ENCODE measurements at regions of chr1 and their contacts with region 1.

Region 1: GRCh38 chr1:100351095-100351891 is 1.0 kb upstream of the CDC14A start:
- DNase-seq: peak; percentile 72 to 95 (median 82)
- ATAC-seq: peak; percentile 74
- H3K4me3 ChIP-seq: peak overlapping the region; percentile 96
- H3K4me3 Mint-ChIP-seq: peak overlapping the region; percentile 93
- H3K27ac ChIP-seq: peak overlapping the region; percentile 86 to 92
- H3K27ac Mint-ChIP-seq: peak overlapping the region; percentile 96
- H3K4me1 ChIP-seq: peaks cover 21% of the 10 kb centered on the region
- H3K4me1 Mint-ChIP-seq: peaks cover 36% of the 10 kb centered on the region
- H3K27me3 ChIP-seq: no peaks in the 10 kb centered on the region
- H3K27me3 Mint-ChIP-seq: no peaks in the 10 kb centered on the region
- CTCF ChIP-seq: peak; percentile 26

Region 2: DNA sequence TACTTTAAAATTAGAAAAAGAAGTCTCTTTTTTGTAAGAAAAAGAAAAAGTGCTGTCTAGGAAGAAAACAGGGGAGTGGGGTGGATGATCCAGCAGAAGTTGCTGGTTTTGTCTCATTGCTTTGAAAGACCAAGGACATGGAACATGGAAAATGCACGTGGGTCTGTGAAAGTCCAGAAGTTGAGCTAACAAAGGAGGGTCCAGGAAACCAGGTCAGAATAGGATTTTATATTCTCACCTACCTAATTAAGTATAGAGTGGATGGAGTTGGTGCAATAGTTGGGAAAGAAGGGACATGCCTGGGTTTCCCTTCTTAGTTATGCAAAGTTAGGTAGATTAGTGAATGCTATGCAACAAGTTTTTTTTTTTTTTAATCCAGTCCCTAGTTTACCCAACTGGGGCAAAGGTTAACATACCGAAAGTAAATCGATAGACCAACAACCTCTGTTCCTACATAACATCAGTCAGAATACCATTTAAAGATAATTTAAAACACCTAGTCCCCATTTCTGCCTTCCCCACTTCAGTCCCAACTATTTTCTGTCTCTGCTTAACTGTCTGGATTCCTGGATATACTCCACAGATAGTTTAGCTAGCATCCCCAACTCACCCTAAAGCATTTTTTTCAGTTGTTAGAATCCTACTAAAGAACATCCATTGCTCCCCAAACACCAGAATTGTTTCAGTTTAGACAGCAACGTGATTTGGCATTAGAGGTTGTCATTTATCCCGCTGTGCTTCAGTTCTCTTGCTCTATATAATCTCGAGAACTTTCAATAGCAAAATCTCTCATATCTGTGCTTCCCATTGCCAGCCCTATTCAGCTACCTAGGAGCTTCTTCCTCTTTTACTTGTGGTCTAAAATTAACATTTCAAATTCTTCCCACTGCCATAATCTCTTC is 1240.9 kb before region 1 on chr1:
- CTCF ChIA-PET with region 1: no interaction called
- POLR2A ChIA-PET with region 1: no interaction called
- intact Hi-C with region 1: no loop called
- DNase-seq: no peak
- ATAC-seq: no peak
- H3K4me3 ChIP-seq: no peak overlapping the region
- H3K4me3 Mint-ChIP-seq: no peak overlapping the region
- H3K27ac ChIP-seq: no peak overlapping the region
- H3K27ac Mint-ChIP-seq: no peak overlapping the region
- H3K4me1 ChIP-seq: peaks cover 3% of the 10 kb centered on the region
- H3K4me1 Mint-ChIP-seq: peaks cover 7% of the 10 kb centered on the region
- H3K27me3 ChIP-seq: no peaks in the 10 kb centered on the region
- H3K27me3 Mint-ChIP-seq: no peaks in the 10 kb centered on the region
- CTCF ChIP-seq: no peak

Region 3: DNA sequence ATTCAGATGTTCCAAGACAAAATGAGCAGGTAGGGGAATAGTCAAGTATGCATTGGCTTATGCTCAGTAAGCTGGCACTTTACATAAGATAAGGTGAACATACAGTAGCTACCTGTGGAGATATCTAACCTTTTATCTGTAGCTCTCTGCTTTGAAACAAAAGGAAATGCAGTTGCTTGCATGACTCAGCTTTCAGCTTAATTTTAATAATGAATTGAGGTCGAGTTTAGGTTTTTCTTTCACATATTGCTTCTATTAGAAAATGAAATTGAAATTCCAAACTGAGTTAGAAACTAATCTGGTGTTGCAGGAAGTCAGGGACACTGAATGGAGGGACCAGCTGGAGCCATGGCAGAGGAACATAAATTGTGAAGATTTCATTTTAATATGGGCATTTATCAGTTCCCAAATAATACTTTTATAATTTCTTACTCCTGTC is 593.2 kb before region 1 on chr1:
- CTCF ChIA-PET with region 1: no interaction called
- POLR2A ChIA-PET with region 1: no interaction called
- intact Hi-C with region 1: no loop called
- DNase-seq: peak in 1 of 14 experiments; percentile 2
- ATAC-seq: no peak
- H3K4me3 ChIP-seq: no peak overlapping the region
- H3K4me3 Mint-ChIP-seq: no peak overlapping the region
- H3K27ac ChIP-seq: no peak overlapping the region
- H3K27ac Mint-ChIP-seq: no peak overlapping the region
- H3K4me1 ChIP-seq: no peaks in the 10 kb centered on the region
- H3K4me1 Mint-ChIP-seq: peaks cover 8% of the 10 kb centered on the region
- H3K27me3 ChIP-seq: no peaks in the 10 kb centered on the region
- H3K27me3 Mint-ChIP-seq: no peaks in the 10 kb centered on the region
- CTCF ChIP-seq: no peak

Region 4: GRCh38 chr1:100132566-100133477 is 218.5 kb before region 1 on chr1 and contains the starts of genes SASS6 and TRMT13:
- CTCF ChIA-PET with region 1: no interaction called
- POLR2A ChIA-PET with region 1: interaction called, 3 read pairs
- intact Hi-C with region 1: loop called in 1 of 2 experiments (anchors 5 kb)
- DNase-seq: peak; percentile 83 to 97 (median 90)
- ATAC-seq: peak; percentile 97
- H3K4me3 ChIP-seq: peak within 1 kb of the TSS; percentile 77
- H3K4me3 Mint-ChIP-seq: peak within 1 kb of the TSS; percentile 89
- H3K27ac ChIP-seq: peak within 1 kb of the TSS; percentile 42 to 43
- H3K27ac Mint-ChIP-seq: peak within 1 kb of the TSS; percentile 92
- H3K4me1 ChIP-seq: peaks cover 12% of the 10 kb centered on the region
- H3K4me1 Mint-ChIP-seq: peaks cover 43% of the 10 kb centered on the region
- H3K27me3 ChIP-seq: no peaks in the 10 kb centered on the region
- H3K27me3 Mint-ChIP-seq: no peaks in the 10 kb centered on the region
- CTCF ChIP-seq: no peak
- total RNA-seq, gene SASS6: 1.7 to 1.8 TPM
- total RNA-seq, gene TRMT13: 6.3 to 6.9 TPM

Region 5: GRCh38 chr1:100284601-100285000 is 66.7 kb before region 1 on chr1:
- CTCF ChIA-PET with region 1: no interaction called
- POLR2A ChIA-PET with region 1: interaction called, 4 read pairs
- intact Hi-C with region 1: loop called in 1 of 2 experiments (anchors 5 kb)
- DNase-seq: no peak
- ATAC-seq: no peak
- H3K4me3 ChIP-seq: no peak overlapping the region
- H3K4me3 Mint-ChIP-seq: no peak overlapping the region
- H3K27ac ChIP-seq: no peak overlapping the region
- H3K27ac Mint-ChIP-seq: no peak overlapping the region
- H3K4me1 ChIP-seq: no peaks in the 10 kb centered on the region
- H3K4me1 Mint-ChIP-seq: peaks cover 15% of the 10 kb centered on the region
- H3K27me3 ChIP-seq: no peaks in the 10 kb centered on the region
- H3K27me3 Mint-ChIP-seq: no peaks in the 10 kb centered on the region
- CTCF ChIP-seq: no peak

Region 6: GRCh38 chr1:100328133-100328532 is 23.2 kb before region 1 on chr1:
- CTCF ChIA-PET with region 1: no interaction called
- POLR2A ChIA-PET with region 1: no interaction called
- intact Hi-C with region 1: no loop called
- DNase-seq: no peak
- ATAC-seq: no peak
- H3K4me3 ChIP-seq: no peak overlapping the region
- H3K4me3 Mint-ChIP-seq: no peak overlapping the region
- H3K27ac ChIP-seq: no peak overlapping the region
- H3K27ac Mint-ChIP-seq: no peak overlapping the region
- H3K4me1 ChIP-seq: no peaks in the 10 kb centered on the region
- H3K4me1 Mint-ChIP-seq: no peaks in the 10 kb centered on the region
- H3K27me3 ChIP-seq: no peaks in the 10 kb centered on the region
- H3K27me3 Mint-ChIP-seq: no peaks in the 10 kb centered on the region
- CTCF ChIP-seq: no peak

Region 7: DNA sequence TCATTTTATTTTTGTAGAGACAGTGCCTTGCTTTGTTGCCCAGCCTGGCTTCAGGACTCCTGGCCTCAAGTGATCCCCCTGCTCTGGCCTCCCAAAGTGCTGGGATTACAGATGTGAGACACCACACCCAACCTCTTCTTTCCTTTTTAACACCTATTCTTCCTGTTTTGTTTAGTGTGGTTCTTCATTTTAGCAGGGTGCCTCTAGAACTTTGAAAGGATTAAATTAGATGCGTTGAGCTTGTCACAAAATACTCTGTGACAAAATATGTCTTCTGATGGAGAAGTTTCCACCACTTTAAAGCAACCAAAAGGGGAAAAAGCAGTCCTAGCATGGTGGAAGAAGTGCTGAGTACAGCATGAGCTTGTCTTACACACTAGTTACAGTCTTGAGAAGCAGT is 43.0 kb after region 1 on chr1:
- CTCF ChIA-PET with region 1: interaction called, 13 read pairs
- POLR2A ChIA-PET with region 1: interaction called, 67 read pairs
- intact Hi-C with region 1: loop called (anchors 2 to 5 kb)
- DNase-seq: peak in 2 of 14 experiments; percentile 28 to 68
- ATAC-seq: no peak
- H3K4me3 ChIP-seq: no peak overlapping the region
- H3K4me3 Mint-ChIP-seq: peak overlapping the region; percentile 62
- H3K27ac ChIP-seq: peak overlapping the region; percentile 40 to 73
- H3K27ac Mint-ChIP-seq: peak overlapping the region; percentile 85
- H3K4me1 ChIP-seq: peaks cover 53% of the 10 kb centered on the region
- H3K4me1 Mint-ChIP-seq: peaks cover 99% of the 10 kb centered on the region
- H3K27me3 ChIP-seq: no peaks in the 10 kb centered on the region
- H3K27me3 Mint-ChIP-seq: no peaks in the 10 kb centered on the region
- CTCF ChIP-seq: no peak

Region 8: DNA sequence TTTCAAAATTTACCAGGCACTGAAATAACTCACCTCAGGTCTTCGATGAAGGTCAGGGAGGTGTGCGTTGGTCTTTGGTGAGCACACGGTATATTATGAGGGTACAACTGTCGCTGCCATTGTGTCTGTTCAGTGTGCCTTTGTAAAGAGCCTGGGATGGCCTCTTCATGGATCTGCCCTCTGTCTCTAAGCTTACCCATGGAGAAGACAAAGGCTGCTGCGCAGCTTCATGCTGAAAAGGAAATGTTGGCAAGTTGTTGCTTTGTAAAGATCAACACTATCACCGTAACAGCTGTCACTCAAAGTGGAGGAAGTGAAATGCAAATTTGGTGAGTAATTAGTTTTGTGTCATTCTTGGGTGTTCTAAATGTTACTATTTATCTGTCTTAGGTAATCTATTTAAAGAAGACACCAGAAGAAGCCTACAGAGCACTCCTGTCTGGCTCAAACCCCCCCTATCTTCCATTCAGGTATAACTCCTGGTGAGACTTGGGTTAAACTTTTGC is 72.6 kb after region 1 on chr1:
- CTCF ChIA-PET with region 1: interaction called, 8 read pairs
- POLR2A ChIA-PET with region 1: interaction called, 54 read pairs
- intact Hi-C with region 1: no loop called
- DNase-seq: peak in 9 of 14 experiments; percentile 11 to 85 (median 33)
- ATAC-seq: peak; percentile 74
- H3K4me3 ChIP-seq: peak overlapping the region; percentile 51
- H3K4me3 Mint-ChIP-seq: peak overlapping the region; percentile 91
- H3K27ac ChIP-seq: peak overlapping the region; percentile 49 to 54
- H3K27ac Mint-ChIP-seq: peak overlapping the region; percentile 94
- H3K4me1 ChIP-seq: peaks cover 34% of the 10 kb centered on the region
- H3K4me1 Mint-ChIP-seq: peaks cover 84% of the 10 kb centered on the region
- H3K27me3 ChIP-seq: no peaks in the 10 kb centered on the region
- H3K27me3 Mint-ChIP-seq: no peaks in the 10 kb centered on the region
- CTCF ChIP-seq: peak; percentile 14

Region 9: GRCh38 chr1:100452641-100453040 is 101.3 kb after region 1 on chr1:
- CTCF ChIA-PET with region 1: interaction called, 40 read pairs
- POLR2A ChIA-PET with region 1: interaction called, 44 read pairs
- intact Hi-C with region 1: loop called (anchors 5 to 10 kb)
- DNase-seq: peak in 3 of 14 experiments; percentile 83 to 87 (median 86)
- ATAC-seq: peak; percentile 88
- H3K4me3 ChIP-seq: no peak overlapping the region
- H3K4me3 Mint-ChIP-seq: peak overlapping the region; percentile 70
- H3K27ac ChIP-seq: peak overlapping the region; percentile 77 to 90
- H3K27ac Mint-ChIP-seq: peak overlapping the region; percentile 94
- H3K4me1 ChIP-seq: peaks cover 51% of the 10 kb centered on the region
- H3K4me1 Mint-ChIP-seq: peaks cover 93% of the 10 kb centered on the region
- H3K27me3 ChIP-seq: no peaks in the 10 kb centered on the region
- H3K27me3 Mint-ChIP-seq: no peaks in the 10 kb centered on the region
- CTCF ChIP-seq: no peak

Region 10: GRCh38 chr1:101105877-101106276 is 754.6 kb after region 1 on chr1:
- CTCF ChIA-PET with region 1: no interaction called
- POLR2A ChIA-PET with region 1: no interaction called
- intact Hi-C with region 1: no loop called
- DNase-seq: no peak
- ATAC-seq: no peak
- H3K4me3 ChIP-seq: no peak overlapping the region
- H3K4me3 Mint-ChIP-seq: no peak overlapping the region
- H3K27ac ChIP-seq: no peak overlapping the region
- H3K27ac Mint-ChIP-seq: no peak overlapping the region
- H3K4me1 ChIP-seq: peaks cover 16% of the 10 kb centered on the region
- H3K4me1 Mint-ChIP-seq: peaks cover 42% of the 10 kb centered on the region
- H3K27me3 ChIP-seq: no peaks in the 10 kb centered on the region
- H3K27me3 Mint-ChIP-seq: no peaks in the 10 kb centered on the region
- CTCF ChIP-seq: no peak

Measured in CD4-positive, alpha-beta T cell (primary cell).